ENCODE measurements at regions of chr2 and their contacts with region 1.

Region 1: GRCh38 chr2:200713003-200713703 is 98.6 kb upstream of the BZW1 start:
- DNase-seq: peak; percentile 62 to 91 (median 72)
- ATAC-seq: peak; percentile 98
- H3K4me3 ChIP-seq: no peak overlapping the region
- H3K27ac ChIP-seq: peak overlapping the region; percentile 68
- H3K4me1 ChIP-seq: peaks cover 4 to 11% of the 10 kb centered on the region in 2 experiments; a peak in 2 of 5 replicates
- H3K27me3 ChIP-seq: no peaks in the 10 kb centered on the region
- CTCF ChIP-seq: peak; percentile 73 to 90 (median 76)
- EP300 ChIP-seq: no peak
- POLR2A ChIP-seq: peak; percentile 70
- RAD21 ChIP-seq: peak; percentile 90

Region 2: DNA sequence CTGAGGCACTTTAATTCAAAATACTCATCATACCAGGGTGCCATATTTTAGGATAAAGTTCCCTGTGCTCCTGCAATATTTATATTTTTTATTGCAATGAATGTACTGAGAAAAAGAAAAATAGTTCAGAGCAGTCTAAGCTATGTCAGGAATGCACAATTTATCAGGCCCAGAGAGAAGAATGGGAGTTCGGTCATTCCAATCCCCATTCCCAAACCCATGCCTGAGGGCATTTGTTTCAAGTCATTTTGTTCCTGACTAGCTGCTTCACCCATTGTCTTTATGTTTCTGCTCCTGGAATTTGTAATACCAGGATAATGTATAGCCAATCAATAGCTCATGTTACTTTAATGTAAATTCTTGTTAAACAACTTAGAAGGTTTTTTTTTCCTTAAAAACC is 837.8 kb before region 1 on chr2:
- CTCF ChIA-PET with region 1: no interaction called
- POLR2A ChIA-PET with region 1: no interaction called
- in situ Hi-C with region 1: no loop called
- intact Hi-C with region 1: no loop called
- DNase-seq: no peak
- ATAC-seq: no peak
- H3K4me3 ChIP-seq: no peak overlapping the region
- H3K27ac ChIP-seq: no peak overlapping the region
- H3K4me1 ChIP-seq: no peaks in the 10 kb centered on the region
- H3K27me3 ChIP-seq: no peaks in the 10 kb centered on the region
- CTCF ChIP-seq: no peak
- EP300 ChIP-seq: no peak
- POLR2A ChIP-seq: no peak
- RAD21 ChIP-seq: no peak

Region 3: GRCh38 chr2:200735061-200735460 is 21.9 kb after region 1 on chr2:
- CTCF ChIA-PET with region 1: no interaction called
- POLR2A ChIA-PET with region 1: no interaction called
- in situ Hi-C with region 1: no loop called
- intact Hi-C with region 1: loop called (anchors 1 kb)
- DNase-seq: no peak
- ATAC-seq: no peak
- H3K4me3 ChIP-seq: no peak overlapping the region
- H3K27ac ChIP-seq: no peak overlapping the region
- H3K4me1 ChIP-seq: no peaks in the 10 kb centered on the region
- H3K27me3 ChIP-seq: peaks cover 2 to 10% of the 10 kb centered on the region in 2 experiments; a peak in 3 of 5 replicates
- CTCF ChIP-seq: no peak
- EP300 ChIP-seq: no peak
- POLR2A ChIP-seq: no peak
- RAD21 ChIP-seq: no peak

Region 4: GRCh38 chr2:200811336-200812121 is 98.4 kb after region 1 on chr2 and contains the start of gene BZW1:
- CTCF ChIA-PET with region 1: interaction called, 10 read pairs
- POLR2A ChIA-PET with region 1: interaction called, 6 read pairs
- in situ Hi-C with region 1: no loop called
- intact Hi-C with region 1: loop called (anchors 1 kb)
- DNase-seq: peak; percentile 94 to 96 (median 94)
- ATAC-seq: peak; percentile 88
- H3K4me3 ChIP-seq: peak within 1 kb of the TSS; percentile 96
- H3K27ac ChIP-seq: peak within 1 kb of the TSS; percentile 100
- H3K4me1 ChIP-seq: peaks cover 0 to 7% of the 10 kb centered on the region in 2 experiments; a peak in 3 of 5 replicates
- H3K27me3 ChIP-seq: no peaks in the 10 kb centered on the region
- CTCF ChIP-seq: no peak; a peak in 1 of 6 replicates
- EP300 ChIP-seq: no peak
- POLR2A ChIP-seq: peak; percentile 91
- RAD21 ChIP-seq: no peak
- polyA plus RNA-seq, gene BZW1: 235 to 244 TPM

Region 5: DNA sequence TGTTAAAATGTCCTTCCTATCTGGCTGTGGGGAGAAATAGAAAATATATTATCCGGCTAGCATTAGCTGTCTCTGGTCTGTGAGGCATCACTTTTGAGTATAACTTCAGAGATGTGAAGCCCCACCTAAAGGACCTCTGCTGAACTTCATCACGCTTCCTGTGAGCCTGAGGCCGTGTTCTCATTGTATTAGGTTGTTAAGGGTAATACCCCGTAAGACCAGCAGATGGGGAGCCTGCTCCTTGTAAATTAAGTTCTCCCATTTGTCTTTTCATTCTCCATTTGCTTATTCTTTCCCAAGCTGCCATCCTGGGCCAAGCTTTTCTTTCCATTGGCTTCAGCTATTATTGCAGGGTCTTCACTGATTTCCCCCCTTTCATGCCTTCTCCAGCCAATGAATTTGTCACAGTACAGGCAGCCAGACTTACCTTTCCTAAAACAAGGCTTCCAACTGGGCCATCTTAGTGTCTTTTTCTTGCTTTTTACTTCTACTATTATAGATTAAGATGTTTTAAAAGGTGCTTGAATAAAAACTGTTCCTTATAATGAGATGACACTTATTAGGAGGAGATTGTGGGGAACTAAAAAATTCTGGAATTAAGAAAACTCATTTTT is 188.4 kb after region 1 on chr2:
- CTCF ChIA-PET with region 1: no interaction called
- POLR2A ChIA-PET with region 1: no interaction called
- in situ Hi-C with region 1: no loop called
- intact Hi-C with region 1: loop called (anchors 2 kb)
- DNase-seq: peak; percentile 67 to 84 (median 73)
- ATAC-seq: peak; percentile 98
- H3K4me3 ChIP-seq: no peak overlapping the region
- H3K27ac ChIP-seq: no peak overlapping the region
- H3K4me1 ChIP-seq: no peaks in the 10 kb centered on the region
- H3K27me3 ChIP-seq: no peaks in the 10 kb centered on the region
- CTCF ChIP-seq: peak; percentile 78 to 92 (median 89)
- EP300 ChIP-seq: no peak
- POLR2A ChIP-seq: no peak
- RAD21 ChIP-seq: peak; percentile 71 to 76

Region 6: DNA sequence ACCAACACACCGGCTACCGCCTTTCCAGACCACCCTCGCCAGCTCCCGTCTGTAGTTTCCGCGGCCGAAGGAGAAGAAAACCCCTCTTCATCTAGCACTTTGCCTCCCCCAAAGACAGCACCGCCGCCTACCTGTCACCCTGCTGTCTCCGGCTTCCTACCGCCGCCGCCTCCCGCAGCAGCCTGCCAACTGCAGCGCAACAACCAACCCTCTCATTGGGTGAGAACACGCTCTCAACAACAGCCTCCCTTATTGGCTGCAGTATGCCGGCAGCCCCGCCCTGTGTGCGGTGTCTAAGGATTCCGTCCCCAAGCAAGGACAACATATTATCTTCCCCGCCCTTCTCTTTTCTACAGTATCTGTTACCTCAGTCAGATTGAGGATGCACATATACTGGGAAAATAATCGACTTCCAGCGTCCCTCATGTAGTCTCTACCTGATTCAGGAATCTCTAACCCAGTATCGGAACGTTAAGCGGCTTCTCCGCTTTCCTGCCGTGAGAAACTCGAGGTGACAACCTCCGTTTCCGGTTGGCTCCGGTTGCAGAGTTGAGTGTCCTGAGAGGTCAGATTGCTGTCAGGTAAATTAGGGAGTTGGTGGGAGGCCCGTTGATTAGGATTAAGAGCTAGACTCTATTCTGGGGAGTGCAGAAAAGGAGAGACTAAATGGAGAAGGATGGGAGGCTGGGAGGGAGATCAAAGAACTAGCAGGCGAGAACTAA is 358.5 kb after region 1 on chr2 and contains the starts of genes HYCC2 and NDUFB3:
- CTCF ChIA-PET with region 1: no interaction called
- POLR2A ChIA-PET with region 1: no interaction called
- in situ Hi-C with region 1: no loop called
- intact Hi-C with region 1: loop called (anchors 2 kb)
- DNase-seq: peak; percentile 94 to 98 (median 96)
- ATAC-seq: peak; percentile 92
- H3K4me3 ChIP-seq: peak within 1 kb of the TSS; percentile 83
- H3K27ac ChIP-seq: peak within 1 kb of the TSS; percentile 99
- H3K4me1 ChIP-seq: peaks cover 4 to 5% of the 10 kb centered on the region in 2 experiments; a peak in 3 of 5 replicates
- H3K27me3 ChIP-seq: no peaks in the 10 kb centered on the region
- CTCF ChIP-seq: peak; percentile 38 to 47 (median 42); a peak in 4 of 6 replicates
- EP300 ChIP-seq: 0 out of 2 replicates have a peak, but pooled peaks have one; percentile 17
- POLR2A ChIP-seq: peak; percentile 84
- RAD21 ChIP-seq: 0 out of 4 replicates have a peak, but pooled peaks of 1 of the 2 experiments have one; percentile 2
- polyA plus RNA-seq, gene HYCC2: 7.5 to 9.8 TPM
- polyA plus RNA-seq, gene NDUFB3: 679 to 786 TPM

Measured in K562 (cell line).